H1 (cell line): ENCODE measurements at regions of chr6 and their contacts with region 1.

Region 1: DNA sequence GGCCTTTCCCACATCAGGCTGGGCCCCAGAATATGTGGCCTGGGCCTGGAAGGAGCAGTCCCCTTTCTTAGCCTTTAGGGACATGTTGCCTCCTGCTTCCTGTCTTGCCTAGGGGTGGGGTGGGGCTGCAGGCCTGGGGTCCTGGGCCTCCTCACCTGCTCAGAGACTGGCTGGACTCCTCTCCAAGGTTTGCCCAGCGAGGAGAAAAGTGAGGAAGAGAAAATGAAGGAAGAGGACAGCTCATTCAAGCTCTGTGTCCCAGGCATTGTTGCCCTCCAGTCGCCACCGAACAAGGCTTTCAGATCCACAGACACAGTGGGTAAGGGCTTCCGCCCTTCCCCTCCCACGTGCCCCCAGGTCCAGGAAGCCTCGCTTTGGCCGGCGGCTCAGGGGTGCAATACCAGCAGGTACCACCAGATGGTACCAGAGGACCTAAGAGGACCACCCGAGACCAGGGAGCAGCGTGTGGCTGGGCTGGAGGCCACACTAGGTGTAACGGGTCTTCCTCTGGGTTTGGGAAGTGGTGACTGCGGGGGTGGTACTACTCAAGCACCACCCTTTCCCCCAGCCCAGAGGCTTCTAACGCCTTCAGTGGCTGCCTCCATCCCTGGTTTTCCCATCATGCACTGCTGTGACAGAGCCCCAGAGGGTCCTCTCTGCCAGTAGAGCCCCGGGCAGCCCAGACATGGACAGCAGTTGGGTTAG is 5.5 kb upstream of the BAK1 start:
- DNase-seq: peak in 1 of 2 experiments; percentile 96
- H3K4me3 ChIP-seq: no peak overlapping the region; a peak in 1 of 8 replicates
- H3K27ac ChIP-seq: no peak overlapping the region
- H3K4me1 ChIP-seq: peaks cover 5 to 15% (median 10%) of the 10 kb centered on the region in 4 experiments
- H3K27me3 ChIP-seq: no peaks in the 10 kb centered on the region
- CTCF ChIP-seq: peak in 2 of 3 experiments; percentile 86 to 94; a peak in 3 of 4 replicates
- EP300 ChIP-seq: no peak
- POLR2A ChIP-seq: no peak
- RAD21 ChIP-seq: peak; percentile 95 to 97

Region 2: GRCh38 chr6:33599413-33599911 is 13.9 kb after region 1 on chr6:
- CTCF ChIA-PET with region 1: interaction called, 11 read pairs
- POLR2A ChIA-PET with region 1: no interaction called
- DNase-seq: no peak
- H3K4me3 ChIP-seq: no peak overlapping the region
- H3K27ac ChIP-seq: no peak overlapping the region
- H3K4me1 ChIP-seq: peaks cover 0 to 4% (median 0%) of the 10 kb centered on the region in 4 experiments; a peak in 2 of 7 replicates
- H3K27me3 ChIP-seq: no peaks in the 10 kb centered on the region
- CTCF ChIP-seq: no peak
- EP300 ChIP-seq: no peak
- POLR2A ChIP-seq: no peak
- RAD21 ChIP-seq: no peak

Region 3: GRCh38 chr6:33613795-33614168 is 28.2 kb after region 1 on chr6:
- CTCF ChIA-PET with region 1: interaction called, 70 read pairs
- POLR2A ChIA-PET with region 1: interaction called, 3 read pairs
- DNase-seq: no peak
- H3K4me3 ChIP-seq: no peak overlapping the region
- H3K27ac ChIP-seq: no peak overlapping the region
- H3K4me1 ChIP-seq: peaks cover 6 to 25% (median 19%) of the 10 kb centered on the region in 4 experiments
- H3K27me3 ChIP-seq: 0 out of 7 replicates have a peak, but pooled peaks cover 0 to 2% (median 0%) of the 10 kb centered on the region in 4 experiments
- CTCF ChIP-seq: no peak
- EP300 ChIP-seq: no peak
- POLR2A ChIP-seq: no peak
- RAD21 ChIP-seq: no peak

Region 4: DNA sequence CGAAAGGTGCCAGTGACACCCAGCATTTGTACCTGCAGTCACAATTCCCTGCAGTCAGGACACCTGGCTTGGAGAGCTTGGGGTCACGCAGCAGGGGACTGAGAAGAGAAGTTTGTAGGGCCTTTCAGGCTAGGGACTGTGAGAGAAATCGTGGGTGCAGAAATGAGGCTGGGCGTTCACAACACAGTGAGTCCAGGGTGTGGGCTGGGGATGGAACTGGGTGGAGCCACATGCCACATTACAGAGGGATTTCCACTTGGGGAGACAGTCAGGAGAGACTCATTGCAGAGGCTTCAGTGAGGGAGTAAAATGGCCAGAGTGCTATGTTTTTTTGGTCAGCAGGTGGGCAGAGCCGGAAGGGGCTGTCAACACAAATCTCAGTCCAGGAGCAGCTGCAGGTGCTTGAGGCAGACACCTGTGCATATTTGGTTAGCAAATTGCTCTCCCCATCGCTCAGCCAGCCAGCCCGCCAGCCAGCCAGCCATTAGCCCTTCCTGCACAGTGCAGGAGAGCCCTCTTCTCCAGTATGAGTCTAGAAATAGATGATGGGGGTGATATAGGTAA is 42.9 kb after region 1 on chr6:
- CTCF ChIA-PET with region 1: interaction called, 94 read pairs
- POLR2A ChIA-PET with region 1: interaction called, 7 read pairs
- DNase-seq: no peak
- H3K4me3 ChIP-seq: no peak overlapping the region
- H3K27ac ChIP-seq: 0 out of 2 replicates have a peak overlapping the region, but pooled peaks have one; percentile 35
- H3K4me1 ChIP-seq: peaks cover 0 to 23% (median 12%) of the 10 kb centered on the region in 4 experiments; a peak in 6 of 7 replicates
- H3K27me3 ChIP-seq: no peaks in the 10 kb centered on the region
- CTCF ChIP-seq: no peak
- EP300 ChIP-seq: no peak
- POLR2A ChIP-seq: no peak
- RAD21 ChIP-seq: no peak

Region 5: GRCh38 chr6:33672808-33673207 is 87.3 kb after region 1 on chr6:
- CTCF ChIA-PET with region 1: interaction called, 131 read pairs
- POLR2A ChIA-PET with region 1: no interaction called
- DNase-seq: no peak
- H3K4me3 ChIP-seq: no peak overlapping the region
- H3K27ac ChIP-seq: no peak overlapping the region
- H3K4me1 ChIP-seq: peaks cover 0 to 3% (median 1%) of the 10 kb centered on the region in 4 experiments; a peak in 1 of 7 replicates
- H3K27me3 ChIP-seq: no peaks in the 10 kb centered on the region
- CTCF ChIP-seq: peak in 2 of 3 experiments; percentile 45 to 73; a peak in 3 of 4 replicates
- EP300 ChIP-seq: no peak
- POLR2A ChIP-seq: no peak
- RAD21 ChIP-seq: peak; percentile 48 to 56

Region 6: GRCh38 chr6:33711140-33712129 is 125.9 kb after region 1 on chr6 and contains the start of gene UQCC2:
- CTCF ChIA-PET with region 1: interaction called, 7 read pairs
- POLR2A ChIA-PET with region 1: interaction called, 10 read pairs
- DNase-seq: peak; percentile 93 to 96
- H3K4me3 ChIP-seq: peak within 1 kb of the TSS; percentile 59 to 86 (median 77)
- H3K27ac ChIP-seq: peak within 1 kb of the TSS; percentile 98
- H3K4me1 ChIP-seq: peaks cover 2 to 14% (median 6%) of the 10 kb centered on the region in 4 experiments; a peak in 4 of 7 replicates
- H3K27me3 ChIP-seq: no peaks in the 10 kb centered on the region
- CTCF ChIP-seq: peak; percentile 62 to 76 (median 64)
- EP300 ChIP-seq: no peak
- POLR2A ChIP-seq: peak; percentile 78 to 92
- RAD21 ChIP-seq: peak; percentile 80 to 82
- total RNA-seq, gene UQCC2: 104 and 107 TPM in 2 replicates